ENCODE measurements at regions of chr1 and their contacts with region 1.

Region 1: DNA sequence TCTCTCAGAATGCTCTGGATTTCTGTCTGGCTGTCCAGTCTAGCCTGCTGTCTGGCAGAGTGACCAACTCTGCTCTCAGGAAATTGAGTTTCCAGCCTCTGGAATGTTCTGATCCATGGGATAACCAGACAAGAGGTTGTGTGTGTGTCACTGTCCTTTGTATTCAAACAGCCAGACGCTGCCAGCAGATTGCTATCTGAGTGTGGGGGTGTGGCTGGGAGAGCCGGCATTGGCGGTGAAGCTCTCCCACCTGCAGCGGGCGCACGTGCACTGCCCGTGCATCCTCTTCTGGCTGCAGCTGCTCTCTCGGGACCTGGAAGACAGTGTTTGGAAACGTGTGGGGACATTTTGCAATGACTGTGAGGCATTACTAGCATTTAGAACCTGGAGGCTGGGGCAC is 26.1 kb downstream of the PKP1 start:
- DNase-seq: peak; percentile 34 to 69
- H3K4me3 ChIP-seq: no peak overlapping the region
- H3K27ac ChIP-seq: no peak overlapping the region
- H3K4me1 ChIP-seq: peaks cover 0 to 3% (median 0%) of the 10 kb centered on the region in 4 experiments; a peak in 1 of 7 replicates
- H3K27me3 ChIP-seq: peaks cover 0 to 10% (median 6%) of the 10 kb centered on the region in 4 experiments; a peak in 4 of 7 replicates
- CTCF ChIP-seq: peak; percentile 57 to 70 (median 68)
- EP300 ChIP-seq: no peak
- POLR2A ChIP-seq: no peak
- RAD21 ChIP-seq: peak; percentile 75 to 77

Region 2: GRCh38 chr1:201261771-201262465 is 47.5 kb before region 1 on chr1:
- CTCF ChIA-PET with region 1: interaction called, 15 read pairs
- POLR2A ChIA-PET with region 1: interaction called, 3 read pairs
- DNase-seq: peak in 1 of 2 experiments; percentile 30
- H3K4me3 ChIP-seq: no peak overlapping the region
- H3K27ac ChIP-seq: no peak overlapping the region
- H3K4me1 ChIP-seq: peaks cover 0 to 11% (median 11%) of the 10 kb centered on the region in 4 experiments; a peak in 6 of 7 replicates
- H3K27me3 ChIP-seq: peaks cover 0 to 8% (median 0%) of the 10 kb centered on the region in 4 experiments; a peak in 3 of 7 replicates
- CTCF ChIP-seq: no peak
- EP300 ChIP-seq: no peak
- POLR2A ChIP-seq: no peak
- RAD21 ChIP-seq: no peak

Region 3: DNA sequence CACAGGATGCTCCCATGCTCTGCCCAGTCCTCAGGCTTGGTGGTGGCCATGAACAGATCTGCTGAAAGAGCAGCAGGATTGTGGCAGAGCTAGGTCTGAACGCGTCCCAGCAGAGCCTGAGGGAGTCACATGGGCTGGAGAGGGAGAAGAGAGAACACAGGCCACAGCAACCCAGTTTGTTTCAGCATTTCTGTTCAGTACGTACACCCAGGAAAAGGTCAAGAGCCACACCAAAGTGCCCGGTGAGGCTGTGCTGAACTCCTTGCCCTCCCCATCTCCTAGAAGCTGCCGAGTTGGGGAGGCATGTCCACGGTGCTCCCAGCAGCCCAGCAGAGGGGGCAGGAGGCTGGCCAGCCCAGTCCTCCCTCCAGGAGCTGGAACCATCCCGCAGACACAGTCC is 20.7 kb before region 1 on chr1:
- CTCF ChIA-PET with region 1: interaction called, 35 read pairs
- POLR2A ChIA-PET with region 1: interaction called, 4 read pairs
- DNase-seq: no peak
- H3K4me3 ChIP-seq: no peak overlapping the region
- H3K27ac ChIP-seq: no peak overlapping the region
- H3K4me1 ChIP-seq: peaks cover 0 to 6% (median 0%) of the 10 kb centered on the region in 4 experiments; a peak in 4 of 7 replicates
- H3K27me3 ChIP-seq: peaks cover 4 to 11% (median 10%) of the 10 kb centered on the region in 4 experiments
- CTCF ChIP-seq: peak in 1 of 3 experiments; percentile 23; a peak in 1 of 4 replicates
- EP300 ChIP-seq: no peak
- POLR2A ChIP-seq: no peak
- RAD21 ChIP-seq: no peak; a peak in 1 of 4 replicates

Region 4: DNA sequence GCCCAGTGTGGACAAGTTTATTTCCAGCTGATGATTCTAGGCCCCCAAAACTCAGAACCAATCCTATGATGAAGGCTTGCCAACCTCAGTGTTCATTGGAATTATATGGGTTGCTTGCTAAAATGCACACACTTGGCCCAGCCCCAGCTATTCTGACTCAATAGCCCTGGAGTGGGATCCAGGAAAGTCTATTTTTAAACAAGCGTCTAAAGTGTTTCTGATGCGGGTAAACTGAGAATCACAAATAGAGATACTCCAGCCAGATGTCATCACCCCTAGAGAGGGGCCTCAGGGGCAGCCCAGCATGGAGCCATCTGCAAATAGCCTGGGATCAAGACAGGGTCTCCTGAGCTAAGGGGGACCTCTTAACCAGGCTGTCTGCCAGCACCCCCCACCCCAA is 19.9 kb after region 1 on chr1:
- CTCF ChIA-PET with region 1: interaction called, 14 read pairs
- POLR2A ChIA-PET with region 1: interaction called, 4 read pairs
- DNase-seq: no peak
- H3K4me3 ChIP-seq: no peak overlapping the region
- H3K27ac ChIP-seq: no peak overlapping the region
- H3K4me1 ChIP-seq: no peaks in the 10 kb centered on the region; a peak in 1 of 7 replicates
- H3K27me3 ChIP-seq: no peaks in the 10 kb centered on the region
- CTCF ChIP-seq: no peak
- EP300 ChIP-seq: no peak
- POLR2A ChIP-seq: no peak
- RAD21 ChIP-seq: no peak

Region 5: DNA sequence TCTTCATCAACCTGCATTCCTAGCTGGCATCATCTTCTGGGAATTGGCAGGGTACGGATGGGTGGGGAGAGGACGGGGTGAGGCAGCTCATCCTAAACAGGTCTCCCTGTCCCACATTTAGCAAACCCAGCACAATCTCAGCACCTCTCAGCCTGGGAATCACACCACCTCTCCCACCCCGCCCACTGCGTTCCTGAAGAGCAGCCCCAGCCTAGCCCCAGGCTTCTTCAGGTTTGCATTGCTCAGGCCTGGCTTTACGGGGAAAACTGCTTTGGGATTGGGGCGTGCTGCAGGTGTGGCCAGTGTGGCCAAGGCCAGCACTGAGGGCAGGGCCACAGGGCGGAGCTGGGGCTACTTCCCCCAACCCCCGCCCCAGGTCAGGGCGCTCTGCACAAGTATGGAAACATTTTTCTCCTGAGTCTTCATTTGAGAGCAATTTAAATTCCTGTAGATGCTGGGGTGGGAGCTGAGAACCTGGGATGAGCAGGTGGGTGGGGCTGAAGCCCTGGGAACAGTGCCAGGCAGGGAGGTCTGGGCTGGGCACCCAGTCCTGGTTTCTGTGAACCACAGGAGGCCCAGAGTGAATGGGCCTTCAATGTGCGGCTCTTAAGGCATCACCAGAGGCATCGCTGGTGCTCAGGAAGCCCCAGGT is 43.9 kb after region 1 on chr1:
- CTCF ChIA-PET with region 1: interaction called, 151 read pairs
- POLR2A ChIA-PET with region 1: interaction called, 4 read pairs
- DNase-seq: no peak
- H3K4me3 ChIP-seq: no peak overlapping the region
- H3K27ac ChIP-seq: no peak overlapping the region
- H3K4me1 ChIP-seq: peaks cover 0 to 11% (median 3%) of the 10 kb centered on the region in 4 experiments; a peak in 6 of 7 replicates
- H3K27me3 ChIP-seq: no peaks in the 10 kb centered on the region
- CTCF ChIP-seq: no peak
- EP300 ChIP-seq: no peak
- POLR2A ChIP-seq: no peak
- RAD21 ChIP-seq: no peak

Region 6: DNA sequence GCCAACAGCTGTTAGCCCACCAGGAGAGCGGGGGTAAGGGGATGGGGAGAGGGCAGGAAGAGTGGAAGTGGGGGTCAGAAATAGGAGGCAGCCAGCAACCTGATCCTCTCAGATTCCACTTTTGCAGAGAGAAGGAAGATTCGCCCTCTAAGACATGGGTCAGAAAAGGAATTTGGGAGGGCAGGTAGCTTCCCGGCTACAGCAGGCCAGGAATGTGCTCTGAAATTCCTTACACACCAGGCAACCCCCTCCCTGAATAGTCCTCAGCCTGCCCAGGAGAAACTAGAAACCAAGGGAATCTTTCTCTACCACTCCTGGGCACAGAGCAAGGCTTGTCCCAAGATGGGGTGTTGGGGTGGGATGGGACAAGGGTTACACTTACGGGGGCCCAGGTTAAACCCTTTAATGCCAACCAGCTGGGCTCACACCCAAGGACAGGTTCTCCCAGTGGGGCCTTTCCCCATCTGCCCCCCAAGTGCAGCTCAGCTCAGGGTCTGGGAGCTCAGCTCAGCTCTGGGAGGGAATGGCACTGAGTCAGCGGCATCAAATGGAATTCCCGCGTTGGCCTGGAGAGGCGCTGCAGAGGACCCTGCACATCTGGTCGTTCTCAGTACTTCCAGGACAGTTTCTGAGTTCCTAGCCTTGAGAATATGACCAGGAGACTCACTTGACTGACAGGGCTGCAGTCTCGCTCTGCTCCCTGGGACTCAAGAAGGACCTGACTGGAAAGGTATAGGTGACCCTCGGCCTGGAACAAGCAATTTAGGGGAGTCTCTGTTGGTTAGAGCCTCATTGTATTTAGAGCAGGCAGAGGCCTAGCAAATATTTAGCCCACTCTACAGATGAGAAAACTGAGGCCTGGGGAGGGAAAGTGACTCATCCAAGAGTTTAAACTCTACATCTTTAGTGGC is 67.3 kb after region 1 on chr1:
- CTCF ChIA-PET with region 1: interaction called, 10 read pairs
- POLR2A ChIA-PET with region 1: interaction called, 3 read pairs
- DNase-seq: peak; percentile 86 to 93
- H3K4me3 ChIP-seq: peak overlapping the region in 3 of 4 experiments; percentile 30 to 51 (median 46); a peak in 5 of 8 replicates
- H3K27ac ChIP-seq: peak overlapping the region; percentile 95
- H3K4me1 ChIP-seq: peaks cover 9 to 40% (median 29%) of the 10 kb centered on the region in 4 experiments
- H3K27me3 ChIP-seq: no peaks in the 10 kb centered on the region
- CTCF ChIP-seq: peak; percentile 67 to 96 (median 94)
- EP300 ChIP-seq: peak in 1 of 2 experiments; percentile 76; a peak in 1 of 3 replicates
- POLR2A ChIP-seq: peak; percentile 76 to 77
- RAD21 ChIP-seq: peak; percentile 37 to 55; a peak in 3 of 4 replicates

Region 7: DNA sequence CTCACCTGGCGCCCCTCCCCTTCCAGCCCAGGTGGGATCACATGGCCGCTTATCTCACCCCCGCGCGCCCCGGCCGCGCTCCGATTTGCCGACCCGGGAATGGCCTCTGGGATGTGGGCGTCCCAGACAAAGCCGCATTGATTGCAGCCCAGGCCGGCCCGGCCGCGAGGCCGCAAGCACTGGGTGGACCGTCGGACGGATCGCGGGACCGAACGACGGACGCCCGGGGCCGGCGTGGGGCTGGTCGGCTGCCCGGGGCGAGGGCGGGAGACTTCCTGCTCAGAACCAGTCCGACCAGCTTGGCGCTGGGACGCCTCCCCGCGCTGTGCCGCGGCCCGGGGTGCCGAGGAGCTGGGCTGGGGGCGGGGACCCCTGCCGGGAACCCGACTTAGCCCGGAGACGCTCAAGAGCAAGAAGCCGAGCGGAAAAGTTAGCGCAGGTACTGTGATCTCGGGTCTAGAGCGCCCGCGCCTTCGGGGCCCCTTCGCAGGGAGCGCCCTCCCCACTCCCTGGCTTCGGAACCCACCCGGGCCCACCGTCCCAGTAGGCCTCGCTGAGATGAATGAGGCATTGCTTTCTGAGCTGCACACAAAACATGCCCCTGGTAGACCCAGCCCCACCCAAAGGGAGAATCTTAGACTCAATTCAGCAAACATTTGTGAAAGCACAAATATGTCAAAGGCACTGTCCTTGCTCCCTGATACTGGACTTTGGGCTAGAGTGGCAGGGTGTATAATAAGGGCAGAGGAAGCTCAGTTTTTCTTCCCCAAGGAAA is 90.1 kb after region 1 on chr1:
- CTCF ChIA-PET with region 1: no interaction called
- POLR2A ChIA-PET with region 1: no interaction called
- DNase-seq: peak; percentile 13 to 85
- H3K4me3 ChIP-seq: peak overlapping the region; percentile 51 to 74 (median 60)
- H3K27ac ChIP-seq: no peak overlapping the region
- H3K4me1 ChIP-seq: peaks cover 3 to 24% (median 16%) of the 10 kb centered on the region in 4 experiments
- H3K27me3 ChIP-seq: peaks cover 0 to 12% (median 2%) of the 10 kb centered on the region in 4 experiments; a peak in 5 of 7 replicates
- CTCF ChIP-seq: no peak
- EP300 ChIP-seq: no peak
- POLR2A ChIP-seq: peak in 1 of 2 experiments; percentile 75; a peak in 2 of 3 replicates
- RAD21 ChIP-seq: no peak

Measured in H1 (cell line).